ENCODE measurements at regions of chr2 and their contacts with region 1.

Region 1: GRCh38 chr2:177164584-177165052 is 48.0 kb upstream of the HNRNPA3 start:
- DNase-seq: peak; percentile 83 to 87 (median 85)
- ATAC-seq: peak; percentile 92
- H3K4me3 ChIP-seq: peak overlapping the region; percentile 6 to 31
- H3K27ac ChIP-seq: peak overlapping the region; percentile 80 to 89
- H3K4me1 ChIP-seq: peaks cover 6 to 24% of the 10 kb centered on the region in 2 donors
- H3K27me3 ChIP-seq: no peaks in the 10 kb centered on the region
- CTCF ChIP-seq: peak; percentile 96 to 99

Region 2: DNA sequence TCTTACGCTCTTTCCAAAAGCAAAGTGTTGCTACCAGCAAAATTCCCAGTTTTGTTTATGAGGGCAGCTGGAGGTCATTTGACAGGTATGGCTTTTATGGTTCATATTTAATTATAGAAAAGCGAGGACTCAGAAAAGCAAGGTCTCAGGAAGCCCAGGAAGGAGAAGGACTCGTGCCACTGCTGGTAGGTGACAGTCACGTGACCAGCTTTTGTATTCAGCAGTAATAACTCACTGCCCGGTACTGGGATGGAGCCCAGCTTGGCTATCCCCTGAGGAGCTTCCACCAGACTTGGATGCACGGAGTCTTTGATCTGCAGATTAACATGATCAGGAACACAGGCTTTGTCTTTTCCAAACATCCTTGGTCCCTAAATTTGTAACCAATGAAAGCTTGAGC is 203.9 kb before region 1 on chr2:
- intact Hi-C with region 1: no loop called
- DNase-seq: no peak
- ATAC-seq: no peak
- H3K4me3 ChIP-seq: no peak overlapping the region
- H3K27ac ChIP-seq: no peak overlapping the region
- H3K4me1 ChIP-seq: no peaks in the 10 kb centered on the region
- H3K27me3 ChIP-seq: no peaks in the 10 kb centered on the region
- CTCF ChIP-seq: no peak

Region 3: DNA sequence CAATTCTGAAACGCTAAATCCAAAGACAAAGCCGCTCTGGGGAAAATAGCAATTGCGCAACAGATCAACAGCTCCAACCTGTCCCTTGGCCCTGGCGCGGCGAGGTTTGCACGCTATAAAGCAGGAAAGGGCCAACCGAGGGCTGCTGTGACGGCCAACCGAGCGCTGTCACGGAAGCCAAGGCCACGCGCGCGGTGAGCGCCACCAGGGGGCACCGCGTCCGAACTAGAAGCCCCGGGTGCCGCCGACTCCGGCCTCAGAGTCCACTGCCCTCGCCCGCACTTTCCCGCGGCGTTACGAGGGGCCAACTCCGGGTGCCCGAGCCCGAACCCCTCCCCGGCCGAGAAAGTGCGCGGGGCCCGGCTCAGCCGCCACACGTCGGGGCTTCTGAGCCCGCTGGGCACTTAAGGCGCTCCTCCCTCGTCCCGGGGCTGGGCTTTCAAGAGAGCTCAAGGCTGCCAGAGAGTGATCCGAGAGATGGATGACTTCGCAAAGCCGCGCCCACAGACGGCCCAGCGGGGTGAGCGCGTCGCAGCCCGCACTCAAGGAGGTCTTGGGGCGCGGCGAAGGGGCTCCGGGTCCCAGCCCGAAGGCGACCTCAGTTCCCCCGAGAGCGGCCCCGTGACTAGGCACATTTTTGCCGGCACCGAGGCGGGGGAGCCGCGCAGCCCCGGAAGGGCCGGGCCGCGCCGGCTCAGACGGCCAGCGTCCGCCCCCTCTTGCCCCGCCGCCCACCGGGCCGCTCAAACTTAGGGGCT is 99.0 kb after region 1 on chr2:
- intact Hi-C with region 1: loop called in 1 of 2 experiments (anchors 10 kb)
- DNase-seq: peak; percentile 98 to 99 (median 99)
- ATAC-seq: peak; percentile 80
- H3K4me3 ChIP-seq: peak overlapping the region; percentile 94
- H3K27ac ChIP-seq: peak overlapping the region; percentile 100
- H3K4me1 ChIP-seq: peaks cover 22 to 56% of the 10 kb centered on the region in 2 donors
- H3K27me3 ChIP-seq: no peaks in the 10 kb centered on the region
- CTCF ChIP-seq: peak; percentile 58 to 87

Region 4: DNA sequence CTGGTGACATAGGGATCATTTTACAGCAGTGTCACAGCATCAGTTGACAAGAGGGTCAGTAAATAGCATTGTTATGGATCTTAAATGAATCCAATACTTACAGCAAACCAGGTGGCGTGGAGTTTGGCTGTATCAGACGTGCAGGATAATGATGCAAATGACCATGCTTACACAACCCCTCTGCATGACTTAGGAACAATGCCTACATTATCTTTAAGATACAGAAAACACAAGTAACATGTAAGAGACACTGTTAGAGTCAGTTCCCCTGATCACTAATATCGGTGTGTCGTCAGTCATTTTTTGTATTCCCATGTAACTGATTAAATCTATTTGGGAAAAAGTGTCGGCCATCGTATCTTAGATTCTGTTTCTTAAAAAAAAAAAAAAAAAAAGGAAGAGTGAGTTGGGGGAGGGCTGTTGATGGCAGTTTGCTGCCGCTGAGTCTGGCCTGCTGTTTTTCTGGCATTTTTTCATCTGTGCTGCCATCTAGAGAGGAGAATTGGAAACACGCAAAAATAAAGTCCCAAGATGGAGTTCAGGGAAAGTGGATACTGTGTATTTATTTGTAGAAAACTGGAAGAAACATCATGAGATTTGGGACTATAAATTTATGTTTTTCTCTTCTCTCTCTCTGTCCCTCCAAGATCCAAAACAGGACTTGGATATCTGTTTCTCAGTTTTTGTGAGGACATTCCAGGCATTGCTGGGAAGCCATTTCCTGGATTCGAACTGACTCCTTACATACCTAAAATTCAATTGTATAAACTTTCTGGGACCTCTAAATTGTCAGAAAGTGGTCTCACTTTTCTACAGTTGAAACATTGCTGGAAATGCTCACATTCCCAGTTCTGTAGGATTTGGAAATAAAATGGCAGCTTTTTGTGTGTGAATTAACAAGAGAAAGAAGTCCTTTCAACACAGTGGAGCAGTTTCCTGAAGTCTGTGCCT is 167.7 kb after region 1 on chr2:
- intact Hi-C with region 1: loop called in 1 of 2 experiments (anchors 5 kb)
- DNase-seq: peak in 3 of 4 donors; percentile 43 to 87 (median 80)
- ATAC-seq: peak; percentile 94
- H3K4me3 ChIP-seq: no peak overlapping the region
- H3K27ac ChIP-seq: no peak overlapping the region
- H3K4me1 ChIP-seq: peaks cover 4 to 5% of the 10 kb centered on the region in 2 donors
- H3K27me3 ChIP-seq: no peaks in the 10 kb centered on the region
- CTCF ChIP-seq: peak; percentile 40 to 48

Region 5: GRCh38 chr2:177400337-177400923 is 235.8 kb after region 1 on chr2:
- intact Hi-C with region 1: loop called in 1 of 2 experiments (anchors 10 kb)
- DNase-seq: no peak
- ATAC-seq: no peak
- H3K4me3 ChIP-seq: no peak overlapping the region
- H3K27ac ChIP-seq: no peak overlapping the region
- H3K4me1 ChIP-seq: peaks cover 0 to 54% of the 10 kb centered on the region in 2 donors
- H3K27me3 ChIP-seq: no peaks in the 10 kb centered on the region
- CTCF ChIP-seq: no peak

Region 6: DNA sequence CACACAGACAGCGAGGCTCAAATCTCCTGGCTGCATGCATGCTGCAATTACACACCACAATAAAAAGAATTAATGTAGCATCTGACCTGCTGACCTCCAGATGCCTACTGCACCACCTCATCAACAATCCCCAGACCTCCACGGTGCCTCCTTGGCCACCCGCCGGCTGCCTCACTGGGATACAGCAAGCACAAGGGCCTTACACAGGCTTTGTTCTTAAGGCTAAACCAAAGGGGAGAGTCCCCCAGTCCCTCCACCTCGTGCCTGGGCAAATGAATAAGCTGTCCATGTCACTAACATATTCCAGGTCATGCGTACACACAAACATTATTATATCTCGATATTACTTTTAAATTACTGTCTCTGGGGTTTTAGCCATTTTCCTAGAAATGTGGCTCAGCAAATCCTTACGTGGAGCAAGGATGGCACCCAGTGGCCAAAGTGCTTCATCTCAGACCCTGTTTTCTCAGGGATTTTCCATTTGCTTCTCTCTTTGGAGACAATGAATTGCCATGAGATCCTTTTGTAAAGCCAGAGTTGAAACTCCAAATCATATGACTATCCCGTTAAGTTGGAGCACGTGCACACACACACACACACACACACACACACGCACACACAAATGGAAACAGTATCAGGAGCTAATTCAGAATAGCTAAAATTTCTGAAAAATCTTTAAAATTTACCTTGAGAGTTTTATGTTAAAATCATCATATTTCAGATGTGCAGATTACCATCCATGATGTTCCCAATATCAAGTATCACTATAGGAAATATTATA is 594.2 kb after region 1 on chr2:
- intact Hi-C with region 1: loop called in 1 of 2 experiments (anchors 10 kb)
- DNase-seq: peak in 2 of 4 donors; percentile 68 to 78
- ATAC-seq: peak; percentile 15
- H3K4me3 ChIP-seq: no peak overlapping the region
- H3K27ac ChIP-seq: no peak overlapping the region
- H3K4me1 ChIP-seq: no peaks in the 10 kb centered on the region
- H3K27me3 ChIP-seq: no peaks in the 10 kb centered on the region
- CTCF ChIP-seq: peak in 1 of 2 donors; percentile 19